ENCODE measurements at regions of chr12 and their contacts with region 1.

Region 1: GRCh38 chr12:46382964-46383653 is 10.5 kb upstream of the SLC38A2 start:
- DNase-seq: peak; percentile 86
- H3K4me3 ChIP-seq: peak overlapping the region; percentile 74
- H3K27ac ChIP-seq: peak overlapping the region; percentile 28
- H3K4me1 ChIP-seq: peaks cover 46% of the 10 kb centered on the region
- CTCF ChIP-seq: peak; percentile 61

Region 2: DNA sequence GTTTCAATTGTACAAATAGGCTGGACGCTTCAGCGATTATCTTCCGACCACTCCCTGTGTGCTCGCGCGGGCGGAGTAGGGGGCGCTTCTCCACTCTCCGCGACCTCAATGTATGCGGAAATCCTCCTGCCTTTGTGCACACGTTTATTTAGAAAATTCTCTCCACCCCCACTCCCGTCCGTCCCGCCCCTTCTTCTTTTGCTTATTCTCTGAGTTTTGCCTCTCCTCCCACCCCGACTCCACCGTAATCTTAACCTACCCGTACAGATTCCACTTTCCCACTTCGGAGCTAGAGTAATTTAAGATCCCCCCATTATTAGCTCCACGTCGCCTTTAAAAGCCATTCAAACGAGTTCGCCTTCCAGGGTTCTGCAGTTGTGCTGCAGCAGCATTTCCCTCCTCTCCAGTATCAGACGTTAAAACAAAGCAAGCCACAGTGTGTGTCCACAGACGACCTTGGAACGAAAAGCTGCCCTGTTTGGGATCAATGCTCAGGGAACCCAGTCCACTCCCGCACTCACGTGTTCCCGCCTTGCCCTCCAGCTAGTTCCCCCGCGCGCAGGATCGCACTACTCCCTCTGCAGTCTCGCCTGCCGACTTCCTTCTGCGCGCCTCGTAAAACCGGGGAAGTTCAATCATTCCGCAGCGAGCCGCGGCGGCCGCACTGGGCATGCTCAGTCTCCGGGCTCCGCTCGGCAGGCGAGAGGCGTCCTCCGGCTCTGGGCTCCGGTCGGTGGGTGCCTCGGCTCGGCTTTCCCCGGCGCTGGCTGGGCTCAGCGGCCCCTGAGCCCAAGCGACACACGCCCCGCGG is 1167.5 kb before region 1 on chr12 and contains the start of gene ANO6:
- CTCF ChIA-PET with region 1: no interaction called
- POLR2A ChIA-PET with region 1: no interaction called
- intact Hi-C with region 1: loop called (anchors 10 kb)
- DNase-seq: peak; percentile 89
- H3K4me3 ChIP-seq: peak within 1 kb of the TSS; percentile 90
- H3K27ac ChIP-seq: peak within 1 kb of the TSS; percentile 90
- H3K4me1 ChIP-seq: peaks cover 19% of the 10 kb centered on the region
- CTCF ChIP-seq: peak; percentile 71
- total RNA-seq, gene ANO6: 11.9 and 15.0 TPM in 2 replicates

Region 3: GRCh38 chr12:46372544-46373110 is 10.5 kb before region 1 on chr12 and contains the start of gene SLC38A2:
- CTCF ChIA-PET with region 1: no interaction called
- POLR2A ChIA-PET with region 1: interaction called, 6 read pairs
- intact Hi-C with region 1: loop called (anchors 1 kb)
- DNase-seq: peak; percentile 93
- H3K4me3 ChIP-seq: peak within 1 kb of the TSS; percentile 95
- H3K27ac ChIP-seq: peak within 1 kb of the TSS; percentile 77
- H3K4me1 ChIP-seq: peaks cover 24% of the 10 kb centered on the region
- CTCF ChIP-seq: no peak
- total RNA-seq, gene SLC38A2: 66.2 and 70.5 TPM in 2 replicates

Region 4: GRCh38 chr12:46404225-46404631 is 21.1 kb after region 1 on chr12:
- CTCF ChIA-PET with region 1: no interaction called
- POLR2A ChIA-PET with region 1: no interaction called
- intact Hi-C with region 1: no loop called
- DNase-seq: no peak
- H3K4me3 ChIP-seq: no peak overlapping the region
- H3K27ac ChIP-seq: no peak overlapping the region
- H3K4me1 ChIP-seq: peaks cover 5% of the 10 kb centered on the region
- CTCF ChIP-seq: no peak

Measured in OCI-LY7 (cell line).